Caco-2 (cell line): ENCODE measurements at regions of chr2 and their contacts with region 1.

Region 1: GRCh38 chr2:226984750-226985582 is 149.1 kb downstream of the RHBDD1 start:
- DNase-seq: peak; percentile 29 to 46
- H3K4me3 ChIP-seq: no peak overlapping the region
- H3K4me3 Mint-ChIP-seq: no peak overlapping the region
- H3K27ac Mint-ChIP-seq: no peak overlapping the region
- H3K4me1 ChIP-seq: no peaks in the 10 kb centered on the region
- H3K4me1 Mint-ChIP-seq: peaks cover 7% of the 10 kb centered on the region
- H3K27me3 ChIP-seq: no peaks in the 10 kb centered on the region
- H3K27me3 Mint-ChIP-seq: no peaks in the 10 kb centered on the region
- CTCF ChIP-seq: peak; percentile 46 to 49

Region 2: GRCh38 chr2:225668606-225669266 is 1316.2 kb before region 1 on chr2:
- CTCF ChIA-PET with region 1: interaction called, 6 read pairs
- POLR2A ChIA-PET with region 1: no interaction called
- intact Hi-C with region 1: loop called (anchors 1 kb)
- DNase-seq: peak in 1 of 2 experiments; percentile 33
- H3K4me3 ChIP-seq: no peak overlapping the region
- H3K4me3 Mint-ChIP-seq: no peak overlapping the region
- H3K27ac Mint-ChIP-seq: no peak overlapping the region
- H3K4me1 ChIP-seq: no peaks in the 10 kb centered on the region
- H3K4me1 Mint-ChIP-seq: no peaks in the 10 kb centered on the region
- H3K27me3 ChIP-seq: no peaks in the 10 kb centered on the region
- H3K27me3 Mint-ChIP-seq: peaks cover 6% of the 10 kb centered on the region
- CTCF ChIP-seq: peak; percentile 37 to 64

Region 3: GRCh38 chr2:225889446-225889850 is 1095.5 kb before region 1 on chr2:
- CTCF ChIA-PET with region 1: interaction called, 6 read pairs
- POLR2A ChIA-PET with region 1: no interaction called
- intact Hi-C with region 1: loop called (anchors 1 kb)
- DNase-seq: peak in 1 of 2 experiments; percentile 40
- H3K4me3 ChIP-seq: no peak overlapping the region
- H3K4me3 Mint-ChIP-seq: no peak overlapping the region
- H3K27ac Mint-ChIP-seq: no peak overlapping the region
- H3K4me1 ChIP-seq: no peaks in the 10 kb centered on the region
- H3K4me1 Mint-ChIP-seq: no peaks in the 10 kb centered on the region
- H3K27me3 ChIP-seq: no peaks in the 10 kb centered on the region
- H3K27me3 Mint-ChIP-seq: no peaks in the 10 kb centered on the region
- CTCF ChIP-seq: peak; percentile 48 to 63

Region 4: GRCh38 chr2:226813148-226813701 is 171.7 kb before region 1 on chr2:
- CTCF ChIA-PET with region 1: no interaction called
- POLR2A ChIA-PET with region 1: no interaction called
- intact Hi-C with region 1: loop called (anchors 1 kb)
- DNase-seq: no peak
- H3K4me3 ChIP-seq: no peak overlapping the region
- H3K4me3 Mint-ChIP-seq: no peak overlapping the region
- H3K27ac Mint-ChIP-seq: no peak overlapping the region
- H3K4me1 ChIP-seq: no peaks in the 10 kb centered on the region
- H3K4me1 Mint-ChIP-seq: no peaks in the 10 kb centered on the region
- H3K27me3 ChIP-seq: no peaks in the 10 kb centered on the region
- H3K27me3 Mint-ChIP-seq: no peaks in the 10 kb centered on the region
- CTCF ChIP-seq: peak; percentile 36 to 49